ENCODE measurements at regions of chr1 and their contacts with region 1.

Region 1: GRCh38 chr1:152034646-152035405 is 2.0 kb downstream of the S100A11 start:
- DNase-seq: peak; percentile 76
- ATAC-seq: peak; percentile 71
- H3K4me3 Mint-ChIP-seq: peak overlapping the region; percentile 89
- H3K27ac Mint-ChIP-seq: peak overlapping the region; percentile 85
- H3K4me1 Mint-ChIP-seq: peaks cover 40% of the 10 kb centered on the region
- H3K27me3 Mint-ChIP-seq: peaks cover 9% of the 10 kb centered on the region
- CTCF ChIP-seq: peak; percentile 88

Region 2: DNA sequence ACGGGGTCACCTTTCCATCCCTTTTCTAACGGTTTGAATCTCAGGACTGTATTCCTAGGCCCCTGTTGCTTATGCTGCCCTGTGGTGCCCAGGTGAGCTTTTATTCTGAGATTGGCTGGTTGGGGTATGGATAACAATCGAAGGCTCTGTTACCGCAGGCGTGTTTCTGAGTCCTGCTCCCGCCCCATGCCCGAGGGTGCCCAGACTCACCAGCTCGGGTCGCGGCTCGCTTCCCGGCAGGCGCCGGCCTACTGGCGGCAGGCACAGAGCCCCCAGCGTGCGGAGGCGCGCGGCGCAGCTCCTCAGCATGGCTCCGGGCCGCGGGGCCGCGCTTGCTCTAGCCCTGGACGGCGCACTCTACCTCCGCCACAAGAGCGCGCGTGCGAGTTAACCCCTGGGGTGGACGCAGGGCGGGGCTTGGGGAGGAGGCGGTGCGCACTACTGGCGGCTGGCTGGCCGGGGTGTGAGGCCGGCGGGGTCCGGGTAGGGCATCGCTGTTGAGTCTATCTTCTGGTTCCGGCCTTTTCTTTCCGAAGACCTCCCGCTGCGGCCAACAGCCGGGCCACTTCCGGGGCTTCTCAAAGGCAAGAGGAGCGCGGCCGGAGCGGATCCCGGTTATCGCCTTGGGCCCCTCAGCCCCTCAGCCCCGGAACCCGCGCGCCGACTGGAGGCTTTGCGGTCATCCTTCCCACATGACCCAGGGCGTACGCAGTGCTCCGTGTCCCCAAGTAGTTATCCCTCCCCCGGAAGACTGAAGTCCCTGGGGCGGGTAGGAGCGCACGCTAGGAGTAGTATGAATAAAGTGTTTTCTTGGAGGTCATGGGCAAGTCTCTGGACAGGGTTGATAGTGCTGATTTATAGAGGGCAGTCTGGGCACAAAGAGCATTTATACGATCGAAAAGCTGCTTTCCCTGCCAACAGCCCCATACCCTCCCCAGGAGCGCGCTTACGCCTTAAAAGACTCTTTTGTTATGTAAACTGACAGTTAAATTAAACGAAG is 125.4 kb before region 1 on chr1 and contains the start of gene THEM4:
- CTCF ChIA-PET with region 1: interaction called, 17 read pairs
- POLR2A ChIA-PET with region 1: no interaction called
- DNase-seq: peak; percentile 99
- ATAC-seq: peak; percentile 97
- H3K4me3 Mint-ChIP-seq: peak within 1 kb of the TSS; percentile 94
- H3K27ac Mint-ChIP-seq: peak within 1 kb of the TSS; percentile 100
- H3K4me1 Mint-ChIP-seq: peaks cover 12% of the 10 kb centered on the region
- H3K27me3 Mint-ChIP-seq: peaks cover 7% of the 10 kb centered on the region
- CTCF ChIP-seq: no peak
- total RNA-seq, gene THEM4: 8.0 to 10.9 TPM (median 8.8 TPM) in 3 replicates

Region 3: DNA sequence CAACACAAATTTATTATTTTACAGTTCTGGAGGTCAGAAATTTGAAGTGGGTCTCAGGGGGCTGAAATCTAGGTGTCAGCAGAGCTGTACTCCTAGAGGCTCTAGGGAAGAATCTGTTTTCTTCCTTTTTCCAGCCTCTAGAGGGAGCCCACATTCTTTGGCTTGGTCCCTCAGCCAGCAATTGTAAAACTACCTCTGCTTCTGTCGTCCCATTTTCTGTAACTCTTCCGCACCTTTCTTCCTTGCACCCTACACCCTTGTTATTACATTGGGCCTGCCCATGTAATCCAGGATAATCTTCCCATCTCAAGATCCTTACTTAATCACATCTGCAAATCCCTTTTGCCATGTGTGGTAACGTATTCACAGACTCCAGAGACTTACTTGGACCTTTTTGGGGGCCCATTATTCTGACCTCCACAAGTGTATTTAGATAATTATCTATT is 100.8 kb before region 1 on chr1:
- CTCF ChIA-PET with region 1: interaction called, 23 read pairs
- POLR2A ChIA-PET with region 1: no interaction called
- DNase-seq: peak; percentile 29
- ATAC-seq: peak; percentile 90
- H3K4me3 Mint-ChIP-seq: no peak overlapping the region
- H3K27ac Mint-ChIP-seq: no peak overlapping the region; the same call in 1 of the 2 replicates
- H3K4me1 Mint-ChIP-seq: peaks cover 17% of the 10 kb centered on the region
- H3K27me3 Mint-ChIP-seq: peaks cover 2% of the 10 kb centered on the region; the same call in 1 of the 2 replicates
- CTCF ChIP-seq: peak; percentile 67

Region 4: GRCh38 chr1:151980287-151981177 is 54.3 kb before region 1 on chr1:
- CTCF ChIA-PET with region 1: no interaction called
- POLR2A ChIA-PET with region 1: no interaction called
- DNase-seq: no peak
- ATAC-seq: no peak
- H3K4me3 Mint-ChIP-seq: no peak overlapping the region
- H3K27ac Mint-ChIP-seq: no peak overlapping the region
- H3K4me1 Mint-ChIP-seq: peaks cover 11% of the 10 kb centered on the region
- H3K27me3 Mint-ChIP-seq: no peaks in the 10 kb centered on the region; the same call in 1 of the 2 replicates
- CTCF ChIP-seq: no peak

Region 5: DNA sequence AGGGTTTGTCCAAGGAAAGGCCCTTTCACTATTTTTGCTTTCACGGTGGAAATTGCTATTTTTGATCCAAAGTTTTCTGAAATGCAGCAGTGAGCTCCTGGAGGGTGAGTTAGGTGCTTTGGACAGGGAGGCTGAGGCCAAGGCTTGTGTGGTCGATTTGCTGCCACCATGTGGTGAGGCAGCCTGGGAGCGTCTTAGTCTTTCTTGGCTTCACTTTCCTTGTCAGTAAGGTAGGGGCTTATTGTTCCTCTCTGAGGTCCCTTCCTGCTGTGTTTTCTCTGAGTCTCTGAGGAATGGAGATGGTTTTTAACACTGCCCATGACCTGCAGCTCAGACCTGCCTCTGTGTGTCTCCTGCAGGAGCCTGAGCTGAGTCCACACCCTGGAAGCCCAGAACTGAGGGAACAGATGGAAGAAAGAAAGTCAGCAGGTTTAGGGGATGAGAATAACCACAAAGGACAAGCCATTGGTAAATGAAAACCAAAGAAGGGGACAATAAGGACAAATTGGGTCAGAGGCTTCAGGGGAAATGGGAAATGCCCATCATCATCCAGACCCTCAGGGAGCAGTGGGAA is 21.1 kb before region 1 on chr1:
- CTCF ChIA-PET with region 1: interaction called, 44 read pairs
- POLR2A ChIA-PET with region 1: no interaction called
- DNase-seq: peak; percentile 66
- ATAC-seq: peak; percentile 74
- H3K4me3 Mint-ChIP-seq: no peak overlapping the region
- H3K27ac Mint-ChIP-seq: peak overlapping the region; percentile 66
- H3K4me1 Mint-ChIP-seq: peaks cover 27% of the 10 kb centered on the region
- H3K27me3 Mint-ChIP-seq: no peaks in the 10 kb centered on the region
- CTCF ChIP-seq: no peak

Region 6: GRCh38 chr1:152110860-152111514 is 76.2 kb after region 1 on chr1:
- CTCF ChIA-PET with region 1: interaction called, 15 read pairs
- POLR2A ChIA-PET with region 1: no interaction called
- DNase-seq: peak; percentile 34
- ATAC-seq: peak; percentile 14
- H3K4me3 Mint-ChIP-seq: no peak overlapping the region
- H3K27ac Mint-ChIP-seq: no peak overlapping the region
- H3K4me1 Mint-ChIP-seq: no peaks in the 10 kb centered on the region; the same call in 1 of the 2 replicates
- H3K27me3 Mint-ChIP-seq: no peaks in the 10 kb centered on the region; the same call in 1 of the 2 replicates
- CTCF ChIP-seq: no peak